ENCODE measurements at regions of chr2 and their contacts with region 1.

Region 1: GRCh38 chr2:190781604-190782198 is 98.9 kb upstream of the GLS start:
- DNase-seq: peak; percentile 71
- H3K4me3 ChIP-seq: no peak overlapping the region
- H3K27ac ChIP-seq: no peak overlapping the region
- H3K4me1 ChIP-seq: peaks cover 0 to 2% of the 10 kb centered on the region in 2 experiments; a peak in 2 of 4 replicates
- H3K27me3 ChIP-seq: no peaks in the 10 kb centered on the region; the same call in 1 of the 2 replicates
- CTCF ChIP-seq: peak; percentile 63
- EP300 ChIP-seq: no peak
- RAD21 ChIP-seq: peak; percentile 92

Region 2: DNA sequence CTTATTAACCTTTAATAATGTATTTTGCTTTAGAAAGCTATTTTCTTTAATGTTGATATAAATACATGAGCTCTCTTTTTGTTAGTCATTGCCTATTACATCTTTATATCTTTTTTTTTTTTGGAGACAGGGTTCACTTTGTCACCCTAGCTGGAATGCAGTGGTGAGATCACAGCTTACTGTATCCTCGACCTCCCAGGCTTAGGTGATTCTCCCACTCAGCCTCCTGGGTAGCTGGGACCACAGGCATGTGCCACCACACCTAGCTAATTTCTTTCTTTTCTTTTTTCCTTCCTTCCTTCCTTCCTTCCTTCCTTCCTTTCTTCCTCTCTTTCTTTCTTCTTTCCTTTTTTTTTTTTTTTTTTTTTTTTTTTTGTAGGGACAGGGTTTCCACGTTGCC is 117.5 kb before region 1 on chr2:
- CTCF ChIA-PET with region 1: no interaction called
- POLR2A ChIA-PET with region 1: no interaction called
- DNase-seq: no peak
- H3K4me3 ChIP-seq: no peak overlapping the region
- H3K27ac ChIP-seq: no peak overlapping the region
- H3K4me1 ChIP-seq: no peaks in the 10 kb centered on the region; a peak in 3 of 4 replicates
- H3K27me3 ChIP-seq: no peaks in the 10 kb centered on the region
- CTCF ChIP-seq: no peak
- EP300 ChIP-seq: no peak
- RAD21 ChIP-seq: no peak

Region 3: GRCh38 chr2:190804182-190804795 is 22.6 kb after region 1 on chr2:
- CTCF ChIA-PET with region 1: interaction called, 45 read pairs
- POLR2A ChIA-PET with region 1: no interaction called
- DNase-seq: no peak
- H3K4me3 ChIP-seq: no peak overlapping the region
- H3K27ac ChIP-seq: peak overlapping the region in 1 of 2 experiments; percentile 62; a peak in 2 of 4 replicates
- H3K4me1 ChIP-seq: peaks cover 0 to 24% of the 10 kb centered on the region in 2 experiments; a peak in 2 of 4 replicates
- H3K27me3 ChIP-seq: no peaks in the 10 kb centered on the region
- CTCF ChIP-seq: peak; percentile 75
- EP300 ChIP-seq: no peak
- RAD21 ChIP-seq: peak; percentile 82

Region 4: GRCh38 chr2:191029280-191029950 is 247.7 kb after region 1 on chr2:
- CTCF ChIA-PET with region 1: interaction called, 13 read pairs
- POLR2A ChIA-PET with region 1: no interaction called
- DNase-seq: no peak
- H3K4me3 ChIP-seq: no peak overlapping the region
- H3K27ac ChIP-seq: no peak overlapping the region
- H3K4me1 ChIP-seq: no peaks in the 10 kb centered on the region; a peak in 1 of 4 replicates
- H3K27me3 ChIP-seq: no peaks in the 10 kb centered on the region
- CTCF ChIP-seq: no peak
- EP300 ChIP-seq: no peak
- RAD21 ChIP-seq: no peak

Measured in SK-N-SH (cell line).